ENCODE measurements at regions of chr7 and their contacts with region 1.

Region 1: DNA sequence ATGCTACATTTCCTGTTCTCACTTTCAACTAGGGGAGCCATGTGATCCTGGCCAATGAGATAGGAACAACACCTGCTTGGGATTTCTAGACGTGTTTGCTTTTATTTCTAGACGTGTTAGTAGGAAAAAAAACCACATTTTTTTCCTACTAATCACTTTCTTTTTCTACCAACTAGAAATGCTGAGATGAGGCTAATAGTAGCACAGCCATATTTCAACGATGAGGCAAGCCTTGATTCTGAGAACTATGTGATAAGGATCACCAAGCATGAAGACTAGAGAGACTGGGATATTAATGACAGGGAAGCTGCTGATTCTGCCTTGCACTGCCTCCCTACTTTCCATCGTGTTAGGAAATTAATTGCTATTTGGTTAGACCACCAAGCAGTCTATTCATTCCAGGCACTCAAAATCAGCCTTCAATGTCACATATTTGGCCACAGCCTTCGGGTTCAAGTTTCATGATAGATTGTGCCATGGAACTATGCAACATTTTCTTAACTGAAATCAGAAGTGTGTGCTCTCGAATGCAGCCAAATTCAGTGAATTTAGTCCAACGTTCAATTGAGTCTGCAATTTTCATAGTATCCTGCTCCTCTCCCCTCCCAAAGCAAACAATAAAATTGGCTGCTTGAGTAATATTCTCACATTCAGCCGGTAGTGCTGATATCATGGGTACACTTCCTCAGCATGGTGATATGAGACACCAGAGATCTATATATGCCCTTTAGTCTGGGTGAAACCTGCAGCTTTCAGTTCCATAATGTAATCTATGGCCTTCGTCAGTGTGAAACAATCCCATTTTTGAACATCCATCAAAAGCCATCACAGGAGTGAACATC is 98.1 kb downstream of the GPR37 start:
- DNase-seq: peak; percentile 40
- ATAC-seq: peak; percentile 87
- H3K4me3 ChIP-seq: no peak overlapping the region
- H3K27ac ChIP-seq: no peak overlapping the region
- H3K4me1 ChIP-seq: peaks cover 13% of the 10 kb centered on the region
- H3K27me3 ChIP-seq: no peaks in the 10 kb centered on the region
- CTCF ChIP-seq: no peak

Region 2: GRCh38 chr7:124322561-124322960 is 345.0 kb before region 1 on chr7:
- CTCF ChIA-PET with region 1: no interaction called
- POLR2A ChIA-PET with region 1: no interaction called
- intact Hi-C with region 1: loop called (anchors 5 kb)
- DNase-seq: peak; percentile 62
- ATAC-seq: peak; percentile 29; the same call in 1 of the 2 replicates
- H3K4me3 ChIP-seq: no peak overlapping the region
- H3K27ac ChIP-seq: no peak overlapping the region
- H3K4me1 ChIP-seq: peaks cover 47% of the 10 kb centered on the region
- H3K27me3 ChIP-seq: no peaks in the 10 kb centered on the region
- CTCF ChIP-seq: no peak

Region 3: DNA sequence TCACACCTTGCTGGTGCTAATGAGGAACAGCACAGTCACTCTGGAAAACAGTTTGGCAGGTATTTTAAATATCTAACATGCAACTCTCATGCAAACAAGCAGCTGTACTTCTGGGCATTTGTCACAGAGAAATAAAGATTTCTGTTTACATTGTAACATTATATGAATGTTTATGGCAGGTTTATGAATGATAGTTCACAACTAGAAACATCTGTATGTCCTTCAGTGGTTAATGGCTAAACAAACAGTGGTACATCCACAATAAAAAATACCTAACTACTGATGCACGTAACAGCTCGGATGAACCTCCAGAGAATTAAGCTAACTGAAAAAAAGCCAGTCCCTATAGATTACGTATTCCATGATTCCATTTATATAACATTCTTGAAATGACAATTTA is 11.5 kb before region 1 on chr7:
- CTCF ChIA-PET with region 1: no interaction called
- POLR2A ChIA-PET with region 1: no interaction called
- intact Hi-C with region 1: loop called (anchors 2 kb)
- DNase-seq: peak; percentile 74
- ATAC-seq: peak; percentile 92
- H3K4me3 ChIP-seq: no peak overlapping the region
- H3K27ac ChIP-seq: no peak overlapping the region
- H3K4me1 ChIP-seq: peaks cover 14% of the 10 kb centered on the region
- H3K27me3 ChIP-seq: no peaks in the 10 kb centered on the region
- CTCF ChIP-seq: no peak

Region 4: GRCh38 chr7:124690840-124691239 is 23.3 kb after region 1 on chr7:
- CTCF ChIA-PET with region 1: no interaction called
- POLR2A ChIA-PET with region 1: no interaction called
- intact Hi-C with region 1: loop called (anchors 2 kb)
- DNase-seq: peak; percentile 85
- ATAC-seq: peak; percentile 93
- H3K4me3 ChIP-seq: no peak overlapping the region
- H3K27ac ChIP-seq: peak overlapping the region; percentile 50
- H3K4me1 ChIP-seq: peaks cover 11% of the 10 kb centered on the region; the same call in 1 of the 2 replicates
- H3K27me3 ChIP-seq: no peaks in the 10 kb centered on the region
- CTCF ChIP-seq: no peak

Region 5: DNA sequence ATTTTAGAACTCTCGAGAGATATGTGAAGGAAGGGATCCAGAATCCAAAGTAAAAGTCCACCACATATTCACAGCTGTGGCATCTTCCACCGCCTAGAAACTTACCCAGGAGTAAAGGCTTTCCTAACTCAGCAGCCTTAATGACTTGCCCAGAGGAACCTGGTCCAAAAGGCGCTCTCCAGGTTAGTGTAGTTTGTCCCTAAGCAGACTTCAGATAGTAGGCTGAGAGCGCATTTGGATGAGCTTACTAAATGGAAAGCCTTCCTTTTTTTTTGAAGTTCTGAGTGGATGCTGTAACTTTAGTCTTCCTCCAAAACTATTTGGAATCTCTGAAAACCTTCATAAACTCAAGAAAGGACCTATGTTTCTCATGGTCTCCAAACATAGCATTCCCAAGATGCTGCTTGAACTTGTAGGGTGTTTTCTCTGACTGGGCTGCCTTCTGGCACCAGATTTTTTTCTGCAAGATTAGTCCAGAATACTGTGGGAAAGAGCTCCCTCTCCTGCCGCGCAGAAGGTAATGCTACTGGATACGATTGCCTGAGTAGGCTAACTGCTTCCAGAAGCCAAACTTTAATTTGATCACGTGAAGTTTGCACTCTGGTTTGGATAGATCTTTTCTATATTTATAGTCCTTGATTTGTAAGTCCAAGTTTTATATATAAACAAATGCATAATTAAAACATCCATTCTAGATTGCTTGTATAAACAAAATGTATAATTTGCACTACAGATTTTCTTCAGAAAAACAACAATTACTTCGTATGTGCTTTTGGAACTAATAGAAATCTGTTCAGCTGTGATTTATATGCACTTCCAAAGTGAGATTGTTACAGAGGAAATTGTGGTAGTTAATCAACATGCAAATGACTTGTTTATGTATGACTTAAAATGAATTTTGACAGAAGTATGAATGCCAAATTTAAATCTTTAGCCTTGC is 117.6 kb after region 1 on chr7:
- CTCF ChIA-PET with region 1: no interaction called
- POLR2A ChIA-PET with region 1: no interaction called
- intact Hi-C with region 1: loop called (anchors 2 kb)
- DNase-seq: peak; percentile 66
- ATAC-seq: peak; percentile 38
- H3K4me3 ChIP-seq: no peak overlapping the region
- H3K27ac ChIP-seq: no peak overlapping the region
- H3K4me1 ChIP-seq: peaks cover 8% of the 10 kb centered on the region; the same call in 1 of the 2 replicates
- H3K27me3 ChIP-seq: no peaks in the 10 kb centered on the region
- CTCF ChIP-seq: peak; percentile 92

Region 6: GRCh38 chr7:125074141-125074540 is 406.6 kb after region 1 on chr7:
- CTCF ChIA-PET with region 1: no interaction called
- POLR2A ChIA-PET with region 1: no interaction called
- intact Hi-C with region 1: no loop called
- DNase-seq: peak; percentile 54
- ATAC-seq: peak; percentile 61
- H3K4me3 ChIP-seq: no peak overlapping the region
- H3K27ac ChIP-seq: no peak overlapping the region
- H3K4me1 ChIP-seq: no peaks in the 10 kb centered on the region
- H3K27me3 ChIP-seq: no peaks in the 10 kb centered on the region
- CTCF ChIP-seq: no peak

Measured in PC-3 (cell line).